ENCODE measurements at regions of chr6 and their contacts with region 1.

Region 1: GRCh38 chr6:137866914-137867684 is at the start of gene TNFAIP3:
- DNase-seq: peak; percentile 94 to 98 (median 96)
- ATAC-seq: peak; percentile 85
- H3K4me3 ChIP-seq: peak within 1 kb of the TSS; percentile 96
- H3K4me3 Mint-ChIP-seq: peak within 1 kb of the TSS; percentile 88 to 98 (median 94)
- H3K27ac ChIP-seq: peak within 1 kb of the TSS; percentile 99
- H3K27ac Mint-ChIP-seq: peak within 1 kb of the TSS; percentile 89 to 100 (median 99)
- H3K4me1 ChIP-seq: peaks cover 13 to 27% of the 10 kb centered on the region in 2 donors
- H3K4me1 Mint-ChIP-seq: peaks cover 37 to 72% (median 59%) of the 10 kb centered on the region in 7 donors
- H3K27me3 ChIP-seq: no peaks in the 10 kb centered on the region
- H3K27me3 Mint-ChIP-seq: no peaks in the 10 kb centered on the region
- total RNA-seq, gene TNFAIP3: 135 to 2,915 (median 141) TPM

Region 2: GRCh38 chr6:136772685-136773472 is 1094.2 kb before region 1 on chr6:
- CTCF ChIA-PET with region 1: no interaction called
- POLR2A ChIA-PET with region 1: no interaction called
- intact Hi-C with region 1: no loop called
- DNase-seq: no peak
- ATAC-seq: peak; percentile 34
- H3K4me3 ChIP-seq: no peak overlapping the region
- H3K4me3 Mint-ChIP-seq: no peak overlapping the region
- H3K27ac ChIP-seq: no peak overlapping the region
- H3K27ac Mint-ChIP-seq: peak overlapping the region in 3 of 9 donors; percentile 1 to 77 (median 23)
- H3K4me1 ChIP-seq: peaks cover 4 to 6% of the 10 kb centered on the region in 2 donors
- H3K4me1 Mint-ChIP-seq: peaks cover 11 to 51% (median 26%) of the 10 kb centered on the region in 7 donors
- H3K27me3 ChIP-seq: no peaks in the 10 kb centered on the region
- H3K27me3 Mint-ChIP-seq: no peaks in the 10 kb centered on the region

Region 3: GRCh38 chr6:137218917-137219663 is 648.0 kb before region 1 on chr6 and contains the start of gene IFNGR1:
- CTCF ChIA-PET with region 1: no interaction called
- POLR2A ChIA-PET with region 1: no interaction called
- intact Hi-C with region 1: loop called in 1 of 2 experiments (anchors 5 kb)
- DNase-seq: peak; percentile 89 to 97 (median 93)
- ATAC-seq: peak; percentile 92
- H3K4me3 ChIP-seq: peak within 1 kb of the TSS; percentile 88
- H3K4me3 Mint-ChIP-seq: peak within 1 kb of the TSS; percentile 85 to 100 (median 99)
- H3K27ac ChIP-seq: peak within 1 kb of the TSS; percentile 91
- H3K27ac Mint-ChIP-seq: peak within 1 kb of the TSS; percentile 91 to 100 (median 100)
- H3K4me1 ChIP-seq: peaks cover 20 to 43% of the 10 kb centered on the region in 2 donors
- H3K4me1 Mint-ChIP-seq: peaks cover 36 to 84% (median 69%) of the 10 kb centered on the region in 7 donors
- H3K27me3 ChIP-seq: no peaks in the 10 kb centered on the region
- H3K27me3 Mint-ChIP-seq: no peaks in the 10 kb centered on the region
- total RNA-seq, gene IFNGR1: 29.2 to 90.7 (median 31.3) TPM

Region 4: DNA sequence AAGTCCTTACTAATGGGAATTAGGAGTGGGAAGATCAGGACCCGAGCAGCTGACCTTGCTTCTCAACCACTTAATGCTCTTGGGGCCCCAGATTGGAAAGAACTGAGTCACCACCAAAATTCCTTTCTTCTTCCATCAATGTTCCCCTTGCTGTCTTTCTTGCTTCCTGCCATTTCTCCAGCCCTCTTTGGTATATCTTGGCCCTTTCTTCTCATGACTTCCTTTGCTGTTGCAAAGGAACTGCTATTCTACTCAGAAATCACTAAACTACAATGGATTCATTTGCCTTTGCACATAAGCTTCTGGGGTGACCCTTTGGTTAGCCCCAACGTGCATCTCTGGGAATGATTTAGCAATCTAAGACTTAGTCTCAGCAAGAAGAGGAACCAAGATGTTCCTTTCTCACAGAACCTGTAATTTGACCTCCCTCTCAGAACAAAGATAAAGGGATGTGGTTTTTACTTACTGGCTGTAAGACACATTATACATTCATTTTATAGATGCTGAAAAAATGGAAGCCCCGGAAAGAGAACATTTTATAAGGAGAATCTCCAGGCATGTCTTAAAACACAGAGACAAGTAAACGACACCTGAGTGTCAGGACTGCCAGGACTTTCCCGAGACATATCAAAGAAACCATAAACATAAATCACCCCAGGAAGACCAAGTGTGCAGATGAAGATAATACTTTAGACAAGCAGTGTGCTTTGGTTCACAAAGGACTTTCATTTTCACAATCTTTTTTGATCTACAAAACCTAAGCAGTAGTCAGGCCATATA is 99.0 kb before region 1 on chr6:
- CTCF ChIA-PET with region 1: interaction called, 3 read pairs
- POLR2A ChIA-PET with region 1: interaction called, 6 read pairs
- intact Hi-C with region 1: loop called in 1 of 2 experiments (anchors 1 kb)
- DNase-seq: peak in 6 of 9 donors; percentile 25 to 49 (median 38)
- ATAC-seq: peak; percentile 81
- H3K4me3 ChIP-seq: no peak overlapping the region
- H3K4me3 Mint-ChIP-seq: peak overlapping the region; percentile 46 to 87 (median 72)
- H3K27ac ChIP-seq: peak overlapping the region; percentile 62
- H3K27ac Mint-ChIP-seq: peak overlapping the region; percentile 83 to 97 (median 93)
- H3K4me1 ChIP-seq: peaks cover 10 to 15% of the 10 kb centered on the region in 2 donors
- H3K4me1 Mint-ChIP-seq: peaks cover 10 to 28% (median 23%) of the 10 kb centered on the region in 7 donors
- H3K27me3 ChIP-seq: no peaks in the 10 kb centered on the region
- H3K27me3 Mint-ChIP-seq: no peaks in the 10 kb centered on the region

Region 5: DNA sequence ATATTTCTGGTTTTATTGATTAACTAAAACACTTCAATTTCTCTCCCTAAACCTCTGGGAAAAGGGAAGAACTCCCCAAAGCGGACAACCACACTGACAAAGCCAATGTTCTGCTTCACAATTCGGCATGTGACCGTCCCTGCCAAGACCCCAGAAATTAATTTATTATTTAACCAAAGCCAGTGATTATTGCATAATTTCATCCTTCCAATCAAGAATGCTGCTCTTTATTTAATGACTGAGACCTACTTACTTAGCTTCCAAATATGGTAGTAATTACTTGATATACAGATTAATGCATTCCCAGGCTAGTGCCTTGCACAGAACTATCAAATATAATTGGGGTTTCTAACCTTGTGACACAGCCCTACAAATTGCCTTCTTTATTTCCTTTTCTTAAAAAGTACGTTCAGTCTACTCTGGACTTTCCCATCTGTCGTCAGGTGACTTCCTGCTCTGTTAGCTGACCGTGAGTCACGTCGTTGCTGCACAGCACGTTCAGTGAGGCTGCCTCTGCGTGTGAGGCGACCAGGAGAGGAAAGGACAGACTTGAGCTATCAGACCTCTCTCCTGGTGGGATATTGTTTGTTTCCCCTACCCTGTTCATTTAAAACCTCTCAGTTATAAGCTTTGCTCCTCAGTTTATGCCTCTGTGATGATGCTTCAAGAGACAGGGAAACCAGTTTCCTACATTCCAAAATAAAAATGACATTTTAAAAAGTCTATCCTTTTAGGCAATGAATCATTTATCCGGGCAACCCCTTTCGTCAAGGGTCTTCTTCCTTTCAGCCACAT is 55.8 kb before region 1 on chr6:
- CTCF ChIA-PET with region 1: interaction called, 13 read pairs
- POLR2A ChIA-PET with region 1: interaction called, 40 read pairs
- intact Hi-C with region 1: loop called in 1 of 2 experiments (anchors 1 kb)
- DNase-seq: peak; percentile 42 to 85 (median 53)
- ATAC-seq: peak; percentile 94
- H3K4me3 ChIP-seq: peak overlapping the region; percentile 14
- H3K4me3 Mint-ChIP-seq: peak overlapping the region; percentile 71 to 84 (median 78)
- H3K27ac ChIP-seq: peak overlapping the region; percentile 60
- H3K27ac Mint-ChIP-seq: peak overlapping the region; percentile 89 to 96 (median 93)
- H3K4me1 ChIP-seq: peaks cover 17 to 23% of the 10 kb centered on the region in 2 donors
- H3K4me1 Mint-ChIP-seq: peaks cover 22 to 56% (median 46%) of the 10 kb centered on the region in 7 donors
- H3K27me3 ChIP-seq: no peaks in the 10 kb centered on the region
- H3K27me3 Mint-ChIP-seq: no peaks in the 10 kb centered on the region

Region 6: DNA sequence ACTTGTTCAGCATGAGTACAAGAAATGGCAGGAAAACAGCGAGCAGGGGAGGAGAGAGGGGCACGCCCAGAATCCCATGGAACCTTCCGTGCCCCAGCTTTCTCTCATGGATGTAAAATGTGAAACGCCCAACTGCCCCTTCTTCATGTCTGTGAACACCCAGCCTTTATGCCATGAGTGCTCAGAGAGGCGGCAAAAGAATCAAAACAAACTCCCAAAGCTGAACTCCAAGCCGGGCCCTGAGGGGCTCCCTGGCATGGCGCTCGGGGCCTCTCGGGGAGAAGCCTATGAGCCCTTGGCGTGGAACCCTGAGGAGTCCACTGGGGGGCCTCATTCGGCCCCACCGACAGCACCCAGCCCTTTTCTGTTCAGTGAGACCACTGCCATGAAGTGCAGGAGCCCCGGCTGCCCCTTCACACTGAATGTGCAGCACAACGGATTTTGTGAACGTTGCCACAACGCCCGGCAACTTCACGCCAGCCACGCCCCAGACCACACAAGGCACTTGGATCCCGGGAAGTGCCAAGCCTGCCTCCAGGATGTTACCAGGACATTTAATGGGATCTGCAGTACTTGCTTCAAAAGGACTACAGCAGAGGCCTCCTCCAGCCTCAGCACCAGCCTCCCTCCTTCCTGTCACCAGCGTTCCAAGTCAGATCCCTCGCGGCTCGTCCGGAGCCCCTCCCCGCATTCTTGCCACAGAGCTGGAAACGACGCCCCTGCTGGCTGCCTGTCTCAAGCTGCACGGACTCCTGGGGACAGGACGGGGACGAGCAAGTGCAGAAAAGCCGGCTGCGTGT is 11.6 kb after region 1 on chr6:
- CTCF ChIA-PET with region 1: interaction called, 9 read pairs
- POLR2A ChIA-PET with region 1: interaction called, 105 read pairs
- intact Hi-C with region 1: loop called in 1 of 2 experiments (anchors 1 kb)
- DNase-seq: peak in 6 of 9 donors; percentile 28 to 45 (median 30)
- ATAC-seq: no peak
- H3K4me3 ChIP-seq: no peak overlapping the region
- H3K4me3 Mint-ChIP-seq: peak overlapping the region in 7 of 10 donors; percentile 38 to 58 (median 42)
- H3K27ac ChIP-seq: no peak overlapping the region
- H3K27ac Mint-ChIP-seq: peak overlapping the region; percentile 18 to 92 (median 81)
- H3K4me1 ChIP-seq: peaks cover 23 to 45% of the 10 kb centered on the region in 2 donors
- H3K4me1 Mint-ChIP-seq: peaks cover 24 to 84% (median 70%) of the 10 kb centered on the region in 7 donors
- H3K27me3 ChIP-seq: no peaks in the 10 kb centered on the region
- H3K27me3 Mint-ChIP-seq: no peaks in the 10 kb centered on the region

Region 7: DNA sequence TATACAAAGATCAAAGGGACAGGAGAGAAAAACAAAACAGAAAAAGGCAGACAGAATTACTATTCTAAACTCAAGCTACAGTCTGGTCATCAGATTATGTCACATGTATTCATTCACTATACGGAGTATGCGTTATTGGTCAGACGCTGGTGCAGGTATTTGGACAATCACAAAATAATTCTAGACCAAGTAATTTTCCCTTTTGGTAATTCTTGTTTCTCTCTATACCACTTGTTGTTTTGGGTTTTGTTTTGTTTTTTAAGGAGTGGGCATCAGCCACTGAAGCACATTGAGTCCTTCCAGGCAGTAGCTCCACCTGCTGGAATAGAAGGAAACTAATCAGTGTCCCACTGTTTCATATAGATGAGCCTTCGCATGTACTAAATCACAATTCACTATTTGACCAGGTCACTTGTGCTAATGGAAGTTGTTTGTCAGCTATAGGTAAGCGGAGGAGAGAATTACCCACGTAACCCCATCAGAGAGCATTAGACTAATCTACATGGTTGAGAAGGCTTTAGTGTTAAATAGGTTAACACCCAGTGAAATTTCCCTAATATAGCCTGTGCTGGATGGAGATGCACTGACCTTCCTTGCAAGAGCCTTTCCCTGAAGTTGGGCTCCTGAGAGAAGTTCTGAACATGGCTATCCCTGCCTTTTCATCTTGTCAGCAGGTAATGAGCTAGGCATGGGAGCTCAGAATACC is 77.8 kb after region 1 on chr6:
- CTCF ChIA-PET with region 1: interaction called, 27 read pairs
- POLR2A ChIA-PET with region 1: interaction called, 15 read pairs
- intact Hi-C with region 1: loop called (anchors 1 kb)
- DNase-seq: peak in 6 of 9 donors; percentile 7 to 52 (median 39)
- ATAC-seq: peak; percentile 88
- H3K4me3 ChIP-seq: no peak overlapping the region
- H3K4me3 Mint-ChIP-seq: no peak overlapping the region
- H3K27ac ChIP-seq: no peak overlapping the region
- H3K27ac Mint-ChIP-seq: peak overlapping the region in 3 of 9 donors; percentile 45 to 76 (median 59)
- H3K4me1 ChIP-seq: peaks cover 1 to 7% of the 10 kb centered on the region in 2 donors
- H3K4me1 Mint-ChIP-seq: peaks cover 4 to 48% (median 18%) of the 10 kb centered on the region in 7 donors
- H3K27me3 ChIP-seq: no peaks in the 10 kb centered on the region
- H3K27me3 Mint-ChIP-seq: no peaks in the 10 kb centered on the region

Region 8: DNA sequence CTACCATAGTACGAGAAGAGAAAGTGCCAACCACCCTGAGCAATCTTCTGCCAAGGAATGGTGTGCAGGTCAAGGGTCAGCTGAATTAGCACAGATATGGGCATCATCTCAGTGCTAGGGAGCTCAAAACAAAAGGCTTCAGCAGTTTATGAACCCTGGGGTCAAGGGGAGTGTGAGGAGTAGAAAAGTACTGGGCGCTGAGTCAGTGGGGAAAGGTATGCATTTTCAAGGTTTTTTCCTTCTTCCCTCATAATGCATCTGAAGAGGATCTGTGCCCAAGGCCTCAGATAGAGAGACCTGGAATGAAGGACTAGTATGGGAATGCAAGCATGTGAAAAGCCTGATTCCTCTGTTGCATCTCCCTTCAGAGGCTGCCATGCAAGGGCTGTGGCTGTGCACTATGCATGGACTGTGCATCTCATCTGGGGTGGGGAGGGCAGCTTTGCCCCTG is 158.5 kb after region 1 on chr6:
- CTCF ChIA-PET with region 1: no interaction called
- POLR2A ChIA-PET with region 1: no interaction called
- intact Hi-C with region 1: no loop called
- DNase-seq: no peak
- ATAC-seq: no peak
- H3K4me3 ChIP-seq: no peak overlapping the region
- H3K4me3 Mint-ChIP-seq: no peak overlapping the region
- H3K27ac ChIP-seq: no peak overlapping the region
- H3K27ac Mint-ChIP-seq: no peak overlapping the region
- H3K4me1 ChIP-seq: no peaks in the 10 kb centered on the region
- H3K4me1 Mint-ChIP-seq: peaks cover 0 to 1% (median 0%) of the 10 kb centered on the region in 7 donors
- H3K27me3 ChIP-seq: no peaks in the 10 kb centered on the region
- H3K27me3 Mint-ChIP-seq: peaks cover 8 to 23% (median 21%) of the 10 kb centered on the region in 5 donors

Region 9: GRCh38 chr6:138403801-138404661 is 536.9 kb after region 1 on chr6 and contains the start of gene HEBP2:
- CTCF ChIA-PET with region 1: no interaction called
- POLR2A ChIA-PET with region 1: no interaction called
- intact Hi-C with region 1: loop called in 1 of 2 experiments (anchors 5 kb)
- DNase-seq: peak; percentile 77 to 95 (median 90)
- ATAC-seq: peak; percentile 94
- H3K4me3 ChIP-seq: peak within 1 kb of the TSS; percentile 98
- H3K4me3 Mint-ChIP-seq: peak within 1 kb of the TSS; percentile 78 to 93 (median 86)
- H3K27ac ChIP-seq: peak within 1 kb of the TSS; percentile 76
- H3K27ac Mint-ChIP-seq: peak within 1 kb of the TSS; percentile 70 to 95 (median 89)
- H3K4me1 ChIP-seq: peaks cover 12 to 14% of the 10 kb centered on the region in 2 donors
- H3K4me1 Mint-ChIP-seq: peaks cover 6 to 43% (median 32%) of the 10 kb centered on the region in 7 donors
- H3K27me3 ChIP-seq: no peaks in the 10 kb centered on the region
- H3K27me3 Mint-ChIP-seq: peaks cover 0 to 22% (median 0%) of the 10 kb centered on the region in 5 donors
- total RNA-seq, gene HEBP2: 24.9 to 50.7 (median 48.2) TPM